ENCODE measurements at regions of chr7 and their contacts with region 1.

Region 1: DNA sequence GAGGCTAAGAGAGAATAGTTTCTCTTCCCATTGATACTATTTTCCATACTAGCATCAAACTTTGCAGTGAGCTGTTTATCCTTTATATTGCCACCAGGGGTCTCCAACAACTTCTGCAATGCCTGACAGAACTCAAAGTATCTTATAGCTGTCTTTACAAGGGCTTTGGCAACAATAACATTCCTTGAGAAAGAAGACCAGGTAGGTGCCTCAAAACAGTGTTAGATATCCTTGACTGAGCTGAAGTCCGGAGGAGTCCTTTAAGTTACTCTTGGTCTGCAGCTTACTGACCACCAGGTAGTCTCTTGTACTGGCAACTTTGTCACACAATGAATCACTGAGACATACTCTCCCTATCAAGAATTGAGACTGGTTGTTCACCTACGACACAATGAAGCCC is 30.0 kb upstream of the TES start:
- DNase-seq: no peak
- H3K4me3 ChIP-seq: no peak overlapping the region
- CTCF ChIP-seq: peak; percentile 66

Region 2: GRCh38 chr7:116138202-116138801 is 42.0 kb before region 1 on chr7:
- CTCF ChIA-PET with region 1: interaction called, 19 read pairs
- POLR2A ChIA-PET with region 1: no interaction called
- DNase-seq: peak; percentile 23
- H3K4me3 ChIP-seq: no peak overlapping the region
- CTCF ChIP-seq: peak; percentile 64

Region 3: DNA sequence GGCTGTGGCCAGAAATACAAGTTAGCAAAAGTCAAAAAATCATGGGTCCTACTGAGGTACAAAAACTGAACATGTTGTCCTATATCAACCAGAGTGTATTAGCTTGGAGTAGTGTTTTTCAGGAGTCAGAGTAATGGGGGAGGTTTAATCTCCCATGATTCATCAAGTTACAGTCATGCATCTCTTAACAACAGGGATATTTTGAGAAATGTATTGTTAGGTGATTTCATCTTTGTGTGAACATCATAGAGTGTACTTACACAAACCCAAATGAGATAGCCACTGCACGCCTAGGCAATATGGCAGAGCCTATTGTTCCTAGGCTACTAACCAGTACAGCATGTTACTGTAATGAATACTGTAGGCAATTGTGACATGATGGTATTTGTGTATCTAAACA is 15.1 kb after region 1 on chr7:
- CTCF ChIA-PET with region 1: interaction called, 57 read pairs
- POLR2A ChIA-PET with region 1: no interaction called
- DNase-seq: no peak
- H3K4me3 ChIP-seq: no peak overlapping the region
- CTCF ChIP-seq: no peak

Region 4: DNA sequence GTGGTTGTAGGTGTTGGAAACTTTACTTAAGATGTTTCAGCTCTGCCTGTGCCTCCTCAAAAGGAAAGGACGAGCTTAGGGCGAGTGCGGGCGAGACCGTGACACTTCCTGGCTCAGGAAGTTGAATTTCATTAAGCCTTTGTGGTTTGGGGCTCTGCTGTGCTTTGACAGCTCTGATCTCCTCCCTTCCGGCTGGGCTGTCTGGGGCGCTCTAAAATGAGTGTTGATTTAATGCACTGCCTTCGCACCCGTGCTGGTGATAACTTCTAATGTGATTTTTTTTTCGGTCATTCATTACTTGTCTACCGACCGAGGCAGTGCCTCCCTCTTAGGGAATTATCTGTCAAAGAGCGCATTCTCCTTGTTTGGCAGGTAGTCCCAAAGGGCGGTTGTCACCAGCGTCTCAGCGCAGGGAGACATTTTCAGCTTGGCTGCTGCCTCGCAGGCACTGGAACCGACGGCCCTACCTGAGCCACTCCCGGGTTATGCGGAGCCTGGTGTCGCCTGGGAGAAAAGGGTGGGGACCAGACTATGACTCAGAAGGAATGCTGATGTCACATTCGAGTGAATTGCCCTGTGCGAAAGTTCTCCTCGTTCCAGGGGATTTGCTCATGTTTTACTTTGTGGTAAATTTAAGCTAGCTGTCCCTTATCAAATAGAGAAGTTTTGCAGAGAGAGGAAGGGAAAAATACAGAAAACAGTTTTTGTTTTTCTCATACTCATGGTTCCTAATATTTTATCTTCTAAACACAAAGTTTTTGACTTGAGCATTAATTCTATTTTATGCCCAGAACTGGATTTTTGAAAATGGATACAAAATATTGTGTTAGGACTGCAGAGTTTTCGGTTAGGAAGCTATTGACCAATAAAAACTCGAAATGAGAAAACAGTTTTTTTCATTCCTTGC is 31.0 kb after region 1 on chr7:
- CTCF ChIA-PET with region 1: interaction called, 34 read pairs
- POLR2A ChIA-PET with region 1: interaction called, 20 read pairs
- DNase-seq: peak; percentile 84
- H3K4me3 ChIP-seq: peak overlapping the region; percentile 80
- CTCF ChIP-seq: no peak

Region 5: GRCh38 chr7:116224492-116225098 is 44.3 kb after region 1 on chr7:
- CTCF ChIA-PET with region 1: interaction called, 567 read pairs
- POLR2A ChIA-PET with region 1: no interaction called
- DNase-seq: no peak
- H3K4me3 ChIP-seq: no peak overlapping the region
- CTCF ChIP-seq: no peak

Region 6: DNA sequence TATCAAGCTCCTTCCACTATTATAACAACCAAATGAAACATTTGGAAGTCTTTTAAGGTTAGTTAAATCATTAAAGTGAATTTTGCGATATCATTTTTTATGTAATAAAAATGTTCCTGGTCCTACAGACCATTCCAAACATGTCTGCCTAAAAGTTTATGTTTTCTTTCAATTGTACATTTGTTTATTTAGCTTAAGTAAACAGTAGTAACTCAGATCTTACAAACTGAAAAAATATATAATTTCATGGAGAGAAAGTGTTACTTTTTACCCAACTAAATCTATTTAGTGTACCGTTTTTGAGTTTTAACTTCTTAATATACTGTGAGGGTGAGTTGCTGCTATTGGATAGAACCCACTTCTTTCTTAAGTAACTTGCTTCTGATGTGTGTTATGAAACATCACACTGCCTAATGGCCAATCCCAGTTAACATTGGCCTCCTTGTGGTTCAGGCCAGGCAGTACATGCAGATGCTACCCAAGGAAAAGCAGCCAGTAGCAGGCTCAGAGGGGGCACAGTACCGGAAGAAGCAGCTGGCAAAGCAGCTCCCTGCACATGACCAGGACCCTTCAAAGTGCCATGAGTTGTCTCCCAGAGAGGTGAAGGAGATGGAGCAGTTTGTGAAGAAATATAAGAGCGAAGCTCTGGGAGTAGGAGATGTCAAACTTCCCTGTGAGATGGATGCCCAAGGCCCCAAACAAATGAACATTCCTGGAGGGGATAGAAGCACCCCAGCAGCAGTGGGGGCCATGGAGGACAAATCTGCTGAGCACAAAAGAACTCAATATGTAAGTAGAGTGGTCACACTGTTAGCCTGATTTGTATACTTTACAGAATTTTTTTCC is 69.6 kb after region 1 on chr7:
- CTCF ChIA-PET with region 1: interaction called, 43 read pairs
- POLR2A ChIA-PET with region 1: no interaction called
- DNase-seq: no peak
- H3K4me3 ChIP-seq: no peak overlapping the region
- CTCF ChIP-seq: peak; percentile 58

Region 7: GRCh38 chr7:116582806-116583444 is 402.6 kb after region 1 on chr7:
- CTCF ChIA-PET with region 1: interaction called, 12 read pairs
- POLR2A ChIA-PET with region 1: no interaction called
- DNase-seq: peak; percentile 91
- H3K4me3 ChIP-seq: no peak overlapping the region
- CTCF ChIP-seq: no peak

Measured in AG04449 (cell line).